Caco-2 (cell line): ENCODE measurements at regions of chr9 and their contacts with region 1.

Region 1: DNA sequence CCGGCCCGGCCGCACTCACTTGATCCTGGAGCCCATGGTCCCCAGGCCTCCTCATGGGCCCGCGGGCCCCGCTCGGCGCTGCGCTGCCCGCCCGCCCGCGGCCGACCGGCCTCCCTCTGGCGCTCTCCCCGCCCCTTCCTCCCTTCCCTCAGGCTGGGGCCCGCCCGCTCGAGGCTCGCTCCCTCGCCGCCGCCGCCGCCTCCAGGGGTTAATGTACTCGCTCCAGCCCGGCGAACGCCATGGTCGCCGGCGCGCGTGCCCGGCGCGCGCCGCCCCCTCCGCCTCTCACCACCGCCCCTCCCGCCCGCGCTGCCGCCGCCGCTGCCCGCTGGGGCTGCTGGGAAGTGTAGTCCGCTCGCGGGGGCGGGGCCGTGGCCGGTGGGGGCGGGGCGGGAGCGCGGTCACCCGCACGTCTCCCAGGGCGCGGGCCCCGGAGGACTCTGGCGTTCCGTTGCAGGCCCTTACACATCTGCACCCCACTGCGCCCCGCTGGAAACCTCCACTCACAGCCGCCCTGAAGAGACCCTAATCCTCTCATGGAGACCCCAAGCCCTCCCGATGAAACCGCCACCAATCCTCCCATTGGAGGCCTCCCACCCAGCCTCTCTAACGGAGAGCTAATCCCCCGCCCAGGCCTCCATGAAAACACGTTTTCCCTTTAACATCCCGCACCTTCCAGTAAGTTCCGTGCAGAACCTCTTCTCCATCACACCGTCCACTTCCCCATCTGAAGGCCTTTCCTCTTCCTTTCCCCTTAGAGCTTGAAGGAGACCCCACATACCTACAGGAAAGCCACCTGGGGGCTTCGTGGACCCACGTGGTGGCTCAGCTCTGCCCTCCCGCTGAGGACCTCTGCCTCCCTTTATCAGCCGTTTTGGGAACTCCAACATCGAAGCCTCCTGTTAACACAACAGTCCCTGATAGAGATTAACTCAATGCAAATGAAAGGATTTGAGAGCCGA is at the start of gene DENND1A:
- DNase-seq: peak; percentile 95 to 96
- H3K4me3 ChIP-seq: peak within 1 kb of the TSS; percentile 68
- H3K4me3 Mint-ChIP-seq: peak within 1 kb of the TSS; percentile 87
- H3K27ac Mint-ChIP-seq: peak within 1 kb of the TSS; percentile 76
- H3K4me1 ChIP-seq: peaks cover 57% of the 10 kb centered on the region
- H3K4me1 Mint-ChIP-seq: peaks cover 43% of the 10 kb centered on the region
- H3K27me3 ChIP-seq: no peaks in the 10 kb centered on the region
- H3K27me3 Mint-ChIP-seq: no peaks in the 10 kb centered on the region
- CTCF ChIP-seq: no peak
- total RNA-seq, gene DENND1A: 34.3 and 41.6 TPM in 2 replicates

Region 2: DNA sequence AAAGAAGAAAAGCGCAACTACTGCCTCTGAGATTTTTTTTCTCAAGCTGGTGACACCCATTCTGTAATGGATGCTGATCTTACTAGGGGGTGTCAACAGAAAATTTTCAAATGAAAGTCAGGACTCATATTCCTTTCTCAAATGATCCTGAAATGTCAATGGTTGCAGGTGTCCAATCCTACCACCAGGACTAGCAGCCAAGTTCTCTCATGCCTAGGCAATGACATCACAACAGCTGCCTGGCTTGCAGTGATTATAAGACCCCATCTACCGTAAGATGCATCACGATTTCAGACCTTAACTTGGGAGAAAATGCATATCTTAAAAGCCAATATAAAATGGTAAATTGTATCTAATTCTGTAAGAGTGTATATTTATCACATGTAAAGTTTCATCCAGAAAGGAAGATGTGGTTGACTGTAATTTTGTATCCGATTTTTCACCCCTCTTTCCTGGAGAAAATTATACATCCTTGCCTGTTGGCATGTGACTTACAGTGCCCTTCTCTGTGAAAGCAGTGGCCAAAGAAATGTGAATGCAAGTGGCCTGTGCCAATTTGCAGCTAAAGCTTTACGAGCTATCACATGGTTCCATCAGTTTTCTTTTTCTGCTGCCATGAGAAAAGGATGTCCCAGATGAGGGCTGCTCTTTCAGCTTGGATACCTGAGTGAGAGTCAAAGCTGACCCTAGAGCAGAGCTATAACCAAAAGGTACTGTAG is 104.7 kb before region 1 on chr9:
- CTCF ChIA-PET with region 1: no interaction called
- POLR2A ChIA-PET with region 1: no interaction called
- intact Hi-C with region 1: no loop called
- DNase-seq: peak in 1 of 2 experiments; percentile 16
- H3K4me3 ChIP-seq: no peak overlapping the region
- H3K4me3 Mint-ChIP-seq: no peak overlapping the region
- H3K27ac Mint-ChIP-seq: no peak overlapping the region
- H3K4me1 ChIP-seq: no peaks in the 10 kb centered on the region
- H3K4me1 Mint-ChIP-seq: no peaks in the 10 kb centered on the region
- H3K27me3 ChIP-seq: no peaks in the 10 kb centered on the region
- H3K27me3 Mint-ChIP-seq: no peaks in the 10 kb centered on the region
- CTCF ChIP-seq: peak in 1 of 2 experiments; percentile 11

Region 3: GRCh38 chr9:123863164-123863855 is 66.8 kb before region 1 on chr9:
- CTCF ChIA-PET with region 1: no interaction called
- POLR2A ChIA-PET with region 1: no interaction called
- intact Hi-C with region 1: loop called (anchors 5 kb)
- DNase-seq: no peak
- H3K4me3 ChIP-seq: no peak overlapping the region
- H3K4me3 Mint-ChIP-seq: no peak overlapping the region
- H3K27ac Mint-ChIP-seq: no peak overlapping the region
- H3K4me1 ChIP-seq: peaks cover 18% of the 10 kb centered on the region
- H3K4me1 Mint-ChIP-seq: peaks cover 7% of the 10 kb centered on the region
- H3K27me3 ChIP-seq: no peaks in the 10 kb centered on the region
- H3K27me3 Mint-ChIP-seq: no peaks in the 10 kb centered on the region
- CTCF ChIP-seq: no peak

Region 4: GRCh38 chr9:124011420-124012301 is 81.5 kb after region 1 on chr9 and contains the start of gene LHX2:
- CTCF ChIA-PET with region 1: no interaction called
- POLR2A ChIA-PET with region 1: no interaction called
- intact Hi-C with region 1: loop called (anchors 5 kb)
- DNase-seq: peak; percentile 88 to 89
- H3K4me3 ChIP-seq: peak within 1 kb of the TSS; percentile 56
- H3K4me3 Mint-ChIP-seq: peak within 1 kb of the TSS; percentile 87
- H3K27ac Mint-ChIP-seq: no peak within 1 kb of the TSS
- H3K4me1 ChIP-seq: peaks cover 36% of the 10 kb centered on the region
- H3K4me1 Mint-ChIP-seq: peaks cover 16% of the 10 kb centered on the region
- H3K27me3 ChIP-seq: peaks cover 11% of the 10 kb centered on the region
- H3K27me3 Mint-ChIP-seq: peaks cover 16% of the 10 kb centered on the region
- CTCF ChIP-seq: no peak
- total RNA-seq, gene LHX2: 2.6 and 4.0 TPM in 2 replicates